Right ventricle myocardium inferior (tissue), 1 donor: ENCODE measurements at regions of chr2 and their contacts with region 1.

Region 1: DNA sequence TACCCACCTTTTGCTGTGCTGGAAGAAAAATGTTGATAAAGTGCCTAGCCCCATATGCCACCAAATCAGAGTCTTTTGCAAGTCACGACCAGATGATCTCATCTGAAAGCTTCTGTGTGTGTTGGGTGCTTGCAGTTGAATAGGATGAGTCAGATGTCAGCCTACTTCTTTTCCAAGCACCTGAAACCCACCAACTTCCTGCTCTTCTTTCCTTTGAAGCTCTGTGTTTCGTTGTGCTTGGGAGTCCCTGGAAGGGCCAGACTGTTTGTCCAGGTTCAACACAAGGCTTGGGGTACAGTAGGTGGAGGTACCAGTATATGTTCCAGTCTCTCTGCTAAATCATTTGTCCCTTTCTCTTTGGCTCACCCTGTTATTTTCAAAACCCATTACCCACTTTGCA is 36.8 kb upstream of the LCLAT1 start:
- DNase-seq: no peak
- ATAC-seq: no peak

Region 2: DNA sequence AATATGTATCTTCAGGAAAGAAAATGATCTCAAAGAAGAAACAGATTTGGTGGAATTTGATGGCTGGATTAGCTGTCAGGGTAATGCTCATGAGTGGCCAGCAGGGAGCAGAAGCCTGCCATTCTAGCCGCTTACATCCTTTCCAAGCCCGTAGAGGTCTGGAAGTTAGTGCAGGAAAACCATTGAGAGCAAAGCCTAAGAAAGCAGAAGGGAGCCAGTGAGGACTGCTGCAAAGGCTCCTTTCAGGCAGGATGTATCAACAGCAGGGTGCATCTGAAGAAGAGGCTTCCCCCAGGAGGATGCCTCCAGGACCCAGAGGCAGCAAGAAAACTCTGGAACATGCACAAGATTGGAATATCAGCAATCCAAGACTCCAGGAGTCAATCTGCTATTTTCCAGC is 201.8 kb before region 1 on chr2:
- intact Hi-C with region 1: loop called (anchors 5 kb)
- DNase-seq: no peak
- ATAC-seq: peak; percentile 90

Region 3: GRCh38 chr2:30239308-30239985 is 170.8 kb before region 1 on chr2:
- intact Hi-C with region 1: loop called (anchors 5 kb)
- DNase-seq: peak; percentile 81
- ATAC-seq: peak; percentile 85

Region 4: GRCh38 chr2:30511122-30512083 is 101.2 kb after region 1 on chr2:
- intact Hi-C with region 1: loop called (anchors 10 kb)
- DNase-seq: no peak
- ATAC-seq: peak; percentile 74

Region 5: GRCh38 chr2:30545875-30546274 is 135.7 kb after region 1 on chr2:
- intact Hi-C with region 1: no loop called
- DNase-seq: no peak
- ATAC-seq: no peak

Region 6: DNA sequence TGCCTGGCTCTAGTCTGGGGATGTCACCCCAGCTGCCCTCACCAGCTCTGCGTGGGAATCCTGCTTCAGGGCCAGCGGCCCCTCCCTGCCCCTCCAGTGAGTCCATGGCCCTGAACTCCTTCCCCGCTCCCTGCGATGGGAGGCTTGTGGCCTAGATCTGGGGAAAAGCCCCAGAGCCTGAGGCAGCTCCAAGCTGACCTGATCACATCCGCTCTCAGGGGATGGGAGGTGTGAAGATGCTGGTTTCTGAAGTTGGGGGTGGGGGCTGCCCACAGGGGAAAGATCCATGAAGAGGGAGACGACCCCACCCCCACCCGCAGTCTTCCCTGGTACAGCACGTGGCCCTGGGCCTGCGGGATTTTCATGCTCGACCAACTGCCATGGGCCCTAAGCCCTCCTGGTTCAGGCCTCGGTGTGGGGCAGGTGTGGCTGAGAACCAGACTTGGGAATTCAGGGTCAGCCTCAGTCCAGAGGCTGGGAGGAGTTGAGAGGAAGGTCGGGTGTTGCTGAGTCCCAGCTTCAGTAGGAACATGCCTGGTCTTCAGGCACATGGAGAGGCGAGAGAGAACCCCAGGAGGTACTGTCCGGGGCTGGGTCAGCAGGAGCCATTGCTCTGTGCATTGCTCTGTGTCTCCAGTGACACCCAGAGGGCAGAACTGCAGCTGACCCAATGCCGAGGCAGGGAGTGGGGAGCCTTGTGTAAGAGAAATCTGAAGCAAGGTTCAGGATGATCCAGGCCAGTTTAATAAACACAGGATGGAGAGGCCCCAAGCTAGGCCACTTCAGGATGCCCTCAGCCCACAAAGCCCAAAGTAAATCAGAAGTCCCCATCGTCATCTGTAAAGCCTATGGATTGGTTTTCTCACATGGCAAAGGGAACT is 282.0 kb after region 1 on chr2:
- intact Hi-C with region 1: loop called (anchors 5 kb)
- DNase-seq: peak; percentile 65
- ATAC-seq: peak; percentile 49